ENCODE measurements at regions of chr1 and their contacts with region 1.

Region 1: GRCh38 chr1:27284425-27285273 is 37.3 kb upstream of the TMEM222 start:
- DNase-seq: peak; percentile 78 to 83
- ATAC-seq: peak; percentile 75 to 89 (median 86)
- H3K4me3 ChIP-seq: no peak overlapping the region
- H3K27ac ChIP-seq: no peak overlapping the region
- H3K4me1 ChIP-seq: no peaks in the 10 kb centered on the region
- H3K27me3 ChIP-seq: no peaks in the 10 kb centered on the region
- CTCF ChIP-seq: peak; percentile 70 to 91 (median 85)

Region 2: DNA sequence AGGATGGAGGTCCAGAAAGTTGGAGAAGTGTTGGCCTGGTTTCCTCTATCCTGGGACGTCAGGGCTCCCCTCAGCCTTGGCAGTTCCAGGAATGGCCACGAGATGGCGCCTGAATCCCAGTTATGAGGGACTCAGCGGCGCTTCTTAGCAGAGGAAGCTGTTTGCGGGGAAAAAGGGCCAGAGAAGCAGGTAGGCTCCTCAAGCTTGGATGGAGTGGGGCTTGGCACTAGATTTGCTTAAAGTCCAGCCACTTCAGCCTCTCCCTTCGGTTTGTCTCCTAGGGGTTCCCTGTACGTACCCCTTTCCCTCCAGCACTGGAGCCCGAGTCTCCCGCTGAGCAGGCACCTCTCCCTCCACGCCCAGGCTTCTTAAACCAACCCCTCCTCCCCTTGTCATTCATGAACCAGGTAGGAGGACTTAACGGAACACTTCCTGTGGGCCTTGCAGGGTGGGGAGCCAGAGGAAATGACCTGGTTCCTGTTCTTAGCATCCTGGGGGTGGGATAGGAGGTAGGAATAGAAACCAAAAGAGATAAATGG is 240.0 kb before region 1 on chr1:
- intact Hi-C with region 1: loop called in 7 of 10 experiments (anchors 2 to 10 kb)
- DNase-seq: peak; percentile 90 to 92
- ATAC-seq: peak; percentile 86 to 97 (median 92)
- H3K4me3 ChIP-seq: peak overlapping the region in 8 of 10 donors; percentile 3 to 39 (median 32)
- H3K27ac ChIP-seq: peak overlapping the region in 7 of 10 donors; percentile 6 to 61 (median 24)
- H3K4me1 ChIP-seq: peaks cover 0 to 34% (median 18%) of the 10 kb centered on the region in 9 donors
- H3K27me3 ChIP-seq: peaks cover 0 to 5% (median 0%) of the 10 kb centered on the region in 7 donors
- CTCF ChIP-seq: peak; percentile 96 to 100 (median 99)

Region 3: GRCh38 chr1:27102707-27103491 is 181.8 kb before region 1 on chr1:
- intact Hi-C with region 1: loop called (anchors 1 to 2 kb)
- DNase-seq: peak; percentile 75 to 85
- ATAC-seq: peak; percentile 31 to 65 (median 50)
- H3K4me3 ChIP-seq: no peak overlapping the region
- H3K27ac ChIP-seq: no peak overlapping the region
- H3K4me1 ChIP-seq: peaks cover 14 to 36% (median 26%) of the 10 kb centered on the region in 9 donors
- H3K27me3 ChIP-seq: no peaks in the 10 kb centered on the region
- CTCF ChIP-seq: peak; percentile 94 to 98 (median 97)

Region 4: GRCh38 chr1:27192039-27192529 is 92.6 kb before region 1 on chr1:
- intact Hi-C with region 1: loop called in 7 of 10 experiments (anchors 5 to 10 kb)
- DNase-seq: no peak
- ATAC-seq: no peak
- H3K4me3 ChIP-seq: no peak overlapping the region
- H3K27ac ChIP-seq: no peak overlapping the region
- H3K4me1 ChIP-seq: peaks cover 0 to 11% (median 0%) of the 10 kb centered on the region in 9 donors
- H3K27me3 ChIP-seq: peaks cover 0 to 5% (median 0%) of the 10 kb centered on the region in 7 donors
- CTCF ChIP-seq: no peak

Region 5: DNA sequence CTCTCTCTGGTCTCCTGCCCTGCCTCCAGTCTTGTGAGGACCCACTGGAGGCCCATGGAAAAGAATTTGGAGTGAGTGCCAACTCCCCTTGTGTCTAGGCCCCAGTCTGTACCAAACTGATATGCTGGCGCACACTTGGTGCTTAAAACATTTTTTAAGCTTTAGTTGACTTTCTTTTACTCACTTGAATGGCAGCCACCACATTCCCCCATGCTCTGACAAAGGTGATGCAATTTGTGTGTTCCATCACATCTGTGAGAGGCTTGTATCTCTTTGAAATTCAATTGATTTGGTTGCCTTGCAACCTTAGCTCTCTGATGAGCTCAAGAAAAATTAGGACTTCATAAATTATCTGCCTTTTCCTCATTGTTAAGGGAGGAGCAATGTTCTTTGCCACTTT is 80.7 kb before region 1 on chr1:
- intact Hi-C with region 1: loop called in 8 of 10 experiments (anchors 2 to 10 kb)
- DNase-seq: no peak
- ATAC-seq: no peak
- H3K4me3 ChIP-seq: no peak overlapping the region
- H3K27ac ChIP-seq: no peak overlapping the region
- H3K4me1 ChIP-seq: no peaks in the 10 kb centered on the region
- H3K27me3 ChIP-seq: peaks cover 0 to 6% (median 0%) of the 10 kb centered on the region in 7 donors
- CTCF ChIP-seq: no peak

Region 6: GRCh38 chr1:27238032-27238431 is 46.6 kb before region 1 on chr1:
- intact Hi-C with region 1: loop called in 1 of 10 experiments (anchors 2 kb)
- DNase-seq: no peak
- ATAC-seq: no peak
- H3K4me3 ChIP-seq: no peak overlapping the region
- H3K27ac ChIP-seq: no peak overlapping the region
- H3K4me1 ChIP-seq: peaks cover 8 to 37% (median 26%) of the 10 kb centered on the region in 9 donors
- H3K27me3 ChIP-seq: no peaks in the 10 kb centered on the region
- CTCF ChIP-seq: no peak

Region 7: DNA sequence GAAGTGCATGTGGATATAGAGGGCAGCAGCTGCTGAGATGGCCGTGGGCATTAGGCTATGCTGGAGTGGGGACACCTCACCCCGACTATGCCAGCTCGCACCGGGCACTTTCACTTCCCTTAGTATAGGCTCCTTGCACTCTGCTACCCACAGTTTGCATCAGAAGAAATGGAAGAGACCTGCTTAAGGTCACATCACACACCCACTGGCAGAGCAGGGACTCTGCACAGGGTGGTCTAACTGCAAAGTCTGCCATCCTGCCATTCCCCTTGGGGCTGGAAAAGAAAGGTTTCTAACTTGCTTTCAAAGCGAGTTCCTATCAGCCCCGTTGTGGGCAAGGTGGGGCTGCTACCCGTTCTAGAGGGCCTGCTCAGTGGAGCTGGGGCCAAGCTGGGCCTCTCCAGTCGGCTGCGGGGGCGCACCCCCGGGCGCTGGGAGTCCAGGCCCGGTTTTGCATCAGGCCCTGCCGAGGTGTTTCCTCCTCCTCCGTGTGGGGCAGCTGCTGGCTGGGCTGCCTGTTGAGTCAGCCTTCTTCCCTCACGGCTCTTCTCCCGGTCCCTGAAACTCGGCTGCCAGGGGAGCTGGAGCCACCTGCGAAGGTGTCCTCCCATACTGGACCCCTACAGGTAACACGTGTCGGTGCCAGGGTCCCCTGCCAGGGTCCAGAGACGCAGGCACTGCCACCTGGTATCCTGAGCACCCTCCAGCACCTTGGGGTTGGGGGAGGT is 57.0 kb after region 1 on chr1 and contains the start of gene SYTL1:
- intact Hi-C with region 1: no loop called
- DNase-seq: no peak
- ATAC-seq: peak in 6 of 8 donors; percentile 20 to 51 (median 26)
- H3K4me3 ChIP-seq: peak within 1 kb of the TSS in 5 of 10 donors; percentile 3 to 60 (median 19)
- H3K27ac ChIP-seq: peak within 1 kb of the TSS in 3 of 10 donors; percentile 19 to 92 (median 67)
- H3K4me1 ChIP-seq: peaks cover 0 to 34% (median 0%) of the 10 kb centered on the region in 9 donors
- H3K27me3 ChIP-seq: no peaks in the 10 kb centered on the region
- CTCF ChIP-seq: no peak
- total RNA-seq, gene SYTL1: 0.30 to 4.3 (median 0.68) TPM